Tibial artery (tissue), 4 donors: ENCODE measurements at regions of chr10 and their contacts with region 1.

Region 1: DNA sequence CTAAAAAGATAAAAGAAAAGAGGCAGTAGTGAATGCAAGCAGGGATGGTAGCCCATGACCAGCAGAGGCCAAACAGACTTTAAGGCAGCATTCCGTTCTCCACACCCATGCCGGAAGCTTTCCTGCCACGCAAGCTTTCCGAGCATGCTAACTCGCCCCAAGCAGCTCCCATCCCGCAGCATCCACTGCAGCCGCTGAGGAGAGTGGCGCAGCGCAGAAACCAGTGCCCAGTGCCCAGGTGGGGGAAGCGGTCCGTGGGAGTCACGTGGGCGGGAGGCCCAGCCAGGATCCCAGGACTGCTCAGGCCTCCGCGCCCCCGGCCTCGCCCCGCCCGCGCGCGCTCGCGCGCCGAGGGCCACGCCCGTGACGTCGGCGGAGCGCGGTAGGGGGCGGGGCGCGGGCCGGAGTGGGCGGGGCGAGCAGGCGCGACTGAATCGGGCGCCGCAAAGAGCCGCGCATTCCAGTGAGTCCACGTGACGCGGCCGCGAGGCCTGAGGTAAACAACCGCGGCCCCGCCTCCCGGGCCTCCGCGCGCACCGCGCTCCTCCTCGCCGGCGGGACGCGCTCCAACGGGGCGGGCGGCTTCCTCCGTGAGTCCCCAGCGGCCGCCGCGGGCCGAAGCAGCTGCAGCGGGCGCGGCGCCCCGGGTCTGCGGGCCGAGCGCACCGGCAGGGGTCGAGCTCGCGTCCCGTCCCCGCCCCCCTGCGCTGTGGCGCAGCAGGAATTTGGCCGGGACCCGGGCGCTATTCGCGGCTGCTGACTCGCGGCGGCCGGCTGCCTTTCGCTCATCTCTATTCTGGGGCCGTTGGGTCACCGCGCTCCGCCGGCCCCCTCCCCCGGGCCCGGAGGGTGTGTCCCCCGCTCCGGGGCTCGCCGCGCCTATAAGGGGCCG is at the start of gene OTUD1:
- DNase-seq: peak; percentile 97 to 98
- H3K4me3 ChIP-seq: peak within 1 kb of the TSS; percentile 96
- H3K27ac ChIP-seq: peak within 1 kb of the TSS; percentile 91 to 97
- H3K4me1 ChIP-seq: peaks cover 0 to 34% (median 20%) of the 10 kb centered on the region in 4 donors
- H3K27me3 ChIP-seq: no peaks in the 10 kb centered on the region
- CTCF ChIP-seq: peak; percentile 11 to 29

Region 2: GRCh38 chr10:22017283-22018020 is 1421.3 kb before region 1 on chr10:
- intact Hi-C with region 1: no loop called
- DNase-seq: no peak
- H3K4me3 ChIP-seq: no peak overlapping the region
- H3K27ac ChIP-seq: no peak overlapping the region
- H3K4me1 ChIP-seq: no peaks in the 10 kb centered on the region
- H3K27me3 ChIP-seq: no peaks in the 10 kb centered on the region
- CTCF ChIP-seq: no peak

Region 3: DNA sequence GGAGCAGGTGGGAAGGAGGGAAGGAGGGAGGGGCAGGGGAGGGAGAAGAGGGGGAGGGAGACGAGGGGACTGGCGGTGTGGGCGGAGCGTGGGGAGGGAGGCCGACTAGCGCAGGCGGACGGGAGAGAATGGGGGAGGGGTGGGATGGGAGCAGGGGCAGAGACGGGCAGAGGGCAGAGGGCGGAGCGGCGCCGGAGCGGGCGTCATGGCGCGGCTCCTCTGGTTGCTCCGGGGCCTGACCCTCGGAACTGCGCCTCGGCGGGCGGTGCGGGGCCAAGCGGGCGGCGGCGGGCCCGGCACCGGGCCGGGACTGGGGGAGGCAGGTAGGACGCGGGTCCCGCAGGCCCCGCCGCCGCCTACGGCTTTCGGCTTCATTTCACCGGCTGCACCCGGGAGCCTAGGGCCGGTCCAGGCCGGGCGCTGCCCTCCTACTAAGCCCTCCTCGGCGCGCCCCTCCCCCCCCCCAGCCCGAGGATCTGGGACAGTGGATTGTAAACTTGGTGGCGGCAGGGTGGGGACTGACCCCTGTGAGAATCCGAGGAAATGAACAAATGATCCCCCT is 343.3 kb before region 1 on chr10 and contains the start of gene MSRB2:
- intact Hi-C with region 1: loop called (anchors 5 kb)
- DNase-seq: peak; percentile 91 to 97
- H3K4me3 ChIP-seq: peak within 1 kb of the TSS; percentile 92 to 96
- H3K27ac ChIP-seq: peak within 1 kb of the TSS; percentile 93 to 96
- H3K4me1 ChIP-seq: peaks cover 6 to 23% (median 12%) of the 10 kb centered on the region in 4 donors
- H3K27me3 ChIP-seq: no peaks in the 10 kb centered on the region
- CTCF ChIP-seq: no peak